Activated T-helper 2 cell treated with anti-CD3 and anti-CD28 coated beads, Interferon-gamma antibody, Interleukin-2, Interleukin-4, amounts not matched to agents 10 μg/mL and 5 μg/mL and 100 μg/mL, durations not matched to agents 14 hours and 24 hours and 36 hours (primary cell): ENCODE measurements at regions of chr9 and their contacts with region 1.

Region 1: GRCh38 chr9:37746848-37747753 is 6.5 kb upstream of the TRMT10B start:
- DNase-seq: peak; percentile 34
- H3K4me3 Mint-ChIP-seq: no peak overlapping the region
- H3K27ac Mint-ChIP-seq: no peak overlapping the region
- H3K4me1 Mint-ChIP-seq: no peaks in the 10 kb centered on the region
- H3K27me3 Mint-ChIP-seq: peaks cover 2% of the 10 kb centered on the region

Region 2: DNA sequence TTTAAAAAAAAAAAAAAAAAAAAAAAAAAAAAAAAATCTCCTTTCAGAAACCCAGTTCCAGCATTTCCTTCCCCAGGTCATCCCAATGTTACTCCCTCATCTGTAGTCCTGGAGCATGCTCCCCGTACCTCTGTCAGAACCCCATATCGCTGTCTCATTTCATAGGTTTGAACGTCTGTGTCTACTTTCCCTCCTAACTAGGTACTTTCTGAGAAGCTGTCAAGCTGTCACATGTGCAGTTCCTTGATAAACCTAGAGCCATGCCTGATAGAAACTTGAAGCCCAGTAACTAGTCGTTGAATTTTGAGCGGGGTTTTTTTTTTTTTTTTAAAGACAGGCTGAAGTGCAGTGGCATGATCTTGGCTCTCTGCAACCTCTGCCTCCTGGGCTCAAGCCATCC is 22.2 kb after region 1 on chr9:
- intact Hi-C with region 1: no loop called
- DNase-seq: no peak
- H3K4me3 Mint-ChIP-seq: no peak overlapping the region
- H3K27ac Mint-ChIP-seq: no peak overlapping the region
- H3K4me1 Mint-ChIP-seq: no peaks in the 10 kb centered on the region
- H3K27me3 Mint-ChIP-seq: no peaks in the 10 kb centered on the region

Region 3: DNA sequence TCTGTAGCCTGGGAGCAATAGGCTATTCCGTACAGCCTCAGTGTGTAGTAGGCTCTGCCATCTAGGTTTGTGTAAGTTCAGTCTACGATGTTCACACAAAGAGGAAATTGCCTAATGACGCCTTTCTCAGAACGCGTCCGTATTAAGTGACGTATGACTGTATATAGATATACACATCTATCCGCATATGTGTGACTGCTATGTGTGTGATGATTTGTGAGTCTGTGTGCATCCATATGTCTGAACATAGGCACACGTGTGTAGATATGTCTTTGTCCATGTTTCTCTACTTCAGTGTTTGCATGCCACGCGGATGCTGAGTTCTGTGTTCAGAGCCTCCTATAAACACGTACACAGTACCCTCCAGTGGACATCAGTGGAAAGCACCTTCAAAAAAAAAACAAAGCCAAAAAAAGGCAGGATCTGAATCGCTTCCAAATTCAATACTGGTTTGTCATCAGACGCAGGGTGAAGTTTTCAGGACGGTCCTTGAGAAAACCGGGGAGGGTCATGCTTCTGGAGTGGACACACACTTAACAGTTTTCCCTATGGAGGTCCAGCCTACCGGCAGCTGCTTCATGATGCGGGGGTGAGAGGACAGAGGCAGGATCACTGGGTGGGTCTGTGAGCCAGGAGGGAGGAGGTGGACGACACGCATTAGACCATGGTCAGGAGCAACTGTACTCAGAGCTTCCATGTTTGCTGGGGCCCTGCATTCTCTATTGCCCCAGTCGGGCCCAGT is 615.9 kb after region 1 on chr9:
- intact Hi-C with region 1: loop called (anchors 10 kb)
- DNase-seq: no peak
- H3K4me3 Mint-ChIP-seq: peak overlapping the region; percentile 46
- H3K27ac Mint-ChIP-seq: no peak overlapping the region
- H3K4me1 Mint-ChIP-seq: peaks cover 4% of the 10 kb centered on the region
- H3K27me3 Mint-ChIP-seq: no peaks in the 10 kb centered on the region